ENCODE measurements at regions of chr5 and their contacts with region 1.

Region 1: DNA sequence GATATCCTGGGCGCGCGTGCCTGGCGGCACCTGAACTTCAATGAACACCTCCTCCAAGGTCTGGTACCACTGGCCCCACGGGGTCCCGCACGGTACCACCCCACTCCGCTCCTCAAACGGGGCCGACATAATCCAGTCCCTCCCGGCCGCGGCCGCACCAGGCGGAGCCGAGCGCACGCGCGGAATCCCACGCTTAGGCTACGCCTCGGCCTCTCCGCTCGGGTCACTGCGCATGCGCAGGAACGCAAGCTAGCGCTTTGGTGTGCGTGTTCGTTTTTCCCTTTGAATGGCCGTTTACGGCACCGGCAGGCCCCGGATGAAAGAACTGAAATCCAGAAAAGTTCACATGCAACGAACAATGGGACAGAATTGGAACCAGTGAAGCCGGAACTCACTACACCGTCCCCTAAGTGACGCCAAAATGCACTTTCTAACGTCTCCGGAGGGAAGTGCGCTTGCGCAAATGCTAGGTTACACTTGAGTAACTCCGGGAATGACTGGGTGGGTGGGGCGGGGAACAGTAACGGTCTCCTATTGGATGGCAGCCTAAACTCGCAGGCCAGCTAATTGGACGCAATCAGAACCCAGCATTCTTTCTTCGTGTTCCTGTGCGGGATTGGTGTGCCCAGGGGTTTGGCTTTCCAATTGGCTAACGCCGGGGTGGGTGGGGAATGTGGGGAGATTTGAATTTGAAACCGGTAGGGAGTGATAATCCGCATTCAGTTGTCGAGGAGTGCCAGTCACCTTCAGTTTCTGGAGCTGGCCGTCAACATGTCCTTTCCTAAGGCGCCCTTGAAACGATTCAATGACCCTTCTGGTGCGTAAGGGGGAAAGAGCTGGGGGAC is at the starts of genes HMMR and NUDCD2:
- DNase-seq: peak; percentile 92
- H3K4me3 Mint-ChIP-seq: peak within 1 kb of the TSS; percentile 96
- H3K27ac Mint-ChIP-seq: peak within 1 kb of the TSS; percentile 97
- H3K4me1 Mint-ChIP-seq: peaks cover 48% of the 10 kb centered on the region
- H3K27me3 Mint-ChIP-seq: no peaks in the 10 kb centered on the region
- total RNA-seq, gene HMMR: 25.5 and 26.8 TPM in 2 replicates
- total RNA-seq, gene NUDCD2: 39.3 and 44.0 TPM in 2 replicates

Region 2: GRCh38 chr5:163437309-163438182 is 22.6 kb before region 1 on chr5 and contains the start of gene CCNG1:
- intact Hi-C with region 1: loop called (anchors 1 kb)
- DNase-seq: peak; percentile 87
- H3K4me3 Mint-ChIP-seq: peak within 1 kb of the TSS; percentile 92
- H3K27ac Mint-ChIP-seq: peak within 1 kb of the TSS; percentile 75
- H3K4me1 Mint-ChIP-seq: peaks cover 59% of the 10 kb centered on the region
- H3K27me3 Mint-ChIP-seq: peaks cover 6% of the 10 kb centered on the region
- total RNA-seq, gene CCNG1: 72.3 and 77.8 TPM in 2 replicates

Region 3: DNA sequence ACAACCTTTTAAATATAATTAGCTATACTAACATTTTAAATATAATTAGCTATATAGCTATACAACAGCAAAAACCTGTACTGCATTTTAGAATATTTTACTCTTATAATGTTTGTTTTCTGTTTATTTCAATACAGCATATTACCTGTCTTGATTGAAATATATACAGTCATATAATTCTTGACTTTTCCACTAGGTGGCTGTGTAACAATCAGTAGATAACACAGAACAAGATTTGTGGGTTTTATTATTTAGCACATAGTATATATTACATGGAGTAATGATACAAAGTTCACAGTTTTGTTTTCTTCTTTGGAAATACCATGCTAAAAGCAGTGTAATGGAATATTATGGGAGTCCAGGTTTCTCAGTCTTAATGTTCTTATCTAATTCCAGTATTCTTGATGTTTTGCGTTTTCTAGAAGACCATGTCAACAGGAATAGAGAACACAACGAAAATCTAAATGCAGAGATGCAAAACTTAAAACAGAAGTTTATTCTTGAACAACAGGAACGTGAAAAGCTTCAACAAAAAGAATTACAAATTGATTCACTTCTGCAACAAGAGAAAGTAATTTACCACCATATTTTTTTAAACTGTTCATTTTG is 13.6 kb after region 1 on chr5:
- intact Hi-C with region 1: loop called (anchors 1 kb)
- DNase-seq: no peak
- H3K4me3 Mint-ChIP-seq: no peak overlapping the region
- H3K27ac Mint-ChIP-seq: no peak overlapping the region
- H3K4me1 Mint-ChIP-seq: peaks cover 8% of the 10 kb centered on the region
- H3K27me3 Mint-ChIP-seq: no peaks in the 10 kb centered on the region